A549 (cell line): ENCODE measurements at regions of chrX and their contacts with region 1.

Region 1: DNA sequence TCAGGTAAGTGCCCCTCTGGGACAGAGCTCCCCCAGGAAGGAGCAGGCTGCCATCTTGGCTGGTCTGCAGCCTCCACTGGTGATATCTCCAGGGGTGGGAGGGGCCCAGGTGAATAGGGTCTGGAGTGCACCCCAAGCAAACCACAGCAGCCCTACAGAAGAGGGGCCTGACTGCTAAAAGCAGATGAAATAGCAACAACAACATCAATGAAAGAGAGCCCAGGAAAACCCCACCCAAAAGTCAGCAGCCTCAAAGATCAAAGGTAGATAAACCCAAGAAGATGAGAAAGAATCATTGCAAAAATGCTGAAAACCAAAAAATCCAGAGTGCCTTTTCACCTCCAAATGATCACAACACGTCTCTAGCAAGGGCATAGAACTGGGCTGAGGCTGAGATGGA is 92.5 kb upstream of the PAGE3 start:
- DNase-seq: no peak
- ATAC-seq: no peak
- H3K4me3 ChIP-seq: no peak overlapping the region
- H3K27ac ChIP-seq: no peak overlapping the region
- H3K4me1 ChIP-seq: no peaks in the 10 kb centered on the region
- CTCF ChIP-seq: no peak
- EP300 ChIP-seq: no peak
- POLR2A ChIP-seq: no peak
- RAD21 ChIP-seq: no peak

Region 2: DNA sequence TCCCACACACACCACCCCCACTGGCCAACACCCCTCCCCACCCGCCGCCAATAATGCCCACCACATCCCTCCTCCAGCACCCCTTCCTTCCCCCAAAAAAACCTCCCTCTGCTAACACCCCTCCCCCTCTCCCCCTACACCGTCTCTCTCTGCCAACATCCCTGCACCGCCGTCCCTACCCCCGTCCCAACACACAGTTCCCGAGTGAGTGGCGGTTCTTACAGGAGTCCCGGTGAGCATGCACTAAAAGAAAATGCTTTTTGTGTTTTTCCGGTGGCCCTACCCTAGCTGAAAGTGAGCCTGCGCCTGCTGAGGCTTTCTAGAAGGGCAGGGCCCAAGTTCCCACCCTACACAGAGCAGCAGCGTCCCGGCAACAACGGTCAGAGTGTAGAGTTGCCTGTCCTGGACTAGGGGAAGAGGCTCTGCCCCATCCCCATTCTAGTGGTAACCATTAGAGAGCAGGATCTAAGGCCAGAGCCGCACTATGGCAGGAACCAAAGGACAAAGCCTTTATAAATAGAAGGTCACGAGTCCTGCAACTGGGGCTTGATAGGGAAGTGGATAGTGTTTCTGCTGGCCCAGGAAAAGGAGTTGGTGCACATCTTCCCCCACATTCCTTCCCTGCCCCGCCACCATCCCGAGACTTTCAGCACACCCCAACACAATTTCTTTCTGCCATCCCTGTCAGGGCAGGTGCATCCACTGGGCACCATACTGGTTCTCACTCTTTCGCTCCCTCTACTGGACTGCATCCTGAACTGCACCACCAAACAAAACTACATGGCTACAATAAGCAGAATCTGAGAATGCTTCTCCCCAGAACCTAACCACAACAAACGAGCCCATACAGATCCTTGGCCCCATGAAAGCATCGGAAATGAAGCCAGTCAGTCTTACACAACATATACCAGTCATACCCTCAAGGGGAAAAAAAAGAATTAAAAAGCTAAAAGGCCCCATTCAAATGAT is 14.4 kb before region 1 on chrX:
- CTCF ChIA-PET with region 1: interaction called, 11 read pairs
- POLR2A ChIA-PET with region 1: no interaction called
- DNase-seq: peak; percentile 25 to 40
- ATAC-seq: peak in 1 of 2 experiments; percentile 75; a peak in 3 of 6 replicates
- H3K4me3 ChIP-seq: no peak overlapping the region
- H3K27ac ChIP-seq: no peak overlapping the region
- H3K4me1 ChIP-seq: no peaks in the 10 kb centered on the region
- CTCF ChIP-seq: no peak
- EP300 ChIP-seq: no peak
- POLR2A ChIP-seq: no peak
- RAD21 ChIP-seq: peak; percentile 15 to 33; a peak in 2 of 5 replicates